ENCODE measurements at regions of chr19 and their contacts with region 1.

Region 1: GRCh38 chr19:44723952-44724319 is 24.6 kb upstream of the BCL3 start:
- DNase-seq: peak; percentile 62 to 93
- H3K4me3 ChIP-seq: no peak overlapping the region
- H3K27ac ChIP-seq: no peak overlapping the region
- H3K4me1 ChIP-seq: peaks cover 0 to 6% (median 4%) of the 10 kb centered on the region in 4 experiments; a peak in 5 of 7 replicates
- H3K27me3 ChIP-seq: no peaks in the 10 kb centered on the region; a peak in 1 of 7 replicates
- CTCF ChIP-seq: peak; percentile 96 to 98 (median 97)
- EP300 ChIP-seq: no peak
- POLR2A ChIP-seq: no peak
- RAD21 ChIP-seq: peak; percentile 97 to 99

Region 2: DNA sequence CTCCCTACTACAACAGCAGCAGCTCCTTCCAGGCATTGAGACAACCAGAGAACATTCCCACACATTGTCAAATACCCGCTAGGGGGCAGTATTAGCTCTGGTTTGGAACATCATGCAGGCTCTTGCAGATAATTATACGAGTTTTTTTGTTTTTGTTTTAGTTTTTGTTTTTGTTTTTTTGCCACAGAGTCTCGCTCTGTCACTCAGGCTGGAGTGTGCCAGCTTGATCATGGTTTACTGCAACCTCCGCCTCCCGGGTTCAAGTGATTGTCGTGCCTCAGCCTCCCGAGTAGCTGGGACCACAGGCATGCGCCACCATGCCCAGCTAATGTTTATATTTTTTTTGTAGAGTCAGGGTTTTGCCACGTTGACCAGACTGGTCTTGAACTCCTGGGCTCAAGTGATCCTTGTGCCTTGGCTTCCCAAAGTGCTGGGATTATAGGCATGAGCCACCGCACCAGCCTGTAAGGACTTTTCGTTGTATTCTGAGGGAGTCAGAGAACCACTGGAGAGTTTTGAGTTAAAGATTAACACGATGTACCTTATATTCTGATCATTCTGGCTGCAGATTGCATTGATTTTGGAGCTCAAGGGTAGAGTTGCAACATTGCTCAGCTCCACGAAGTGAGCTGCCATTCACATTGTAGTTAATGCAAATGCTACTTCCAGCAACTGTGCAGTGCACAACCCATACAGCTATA is 152.8 kb before region 1 on chr19:
- CTCF ChIA-PET with region 1: interaction called, 18 read pairs
- POLR2A ChIA-PET with region 1: no interaction called
- DNase-seq: peak in 1 of 2 experiments; percentile 80
- H3K4me3 ChIP-seq: no peak overlapping the region
- H3K27ac ChIP-seq: no peak overlapping the region
- H3K4me1 ChIP-seq: no peaks in the 10 kb centered on the region
- H3K27me3 ChIP-seq: no peaks in the 10 kb centered on the region
- CTCF ChIP-seq: peak in 2 of 3 experiments; percentile 62 to 82; a peak in 3 of 4 replicates
- EP300 ChIP-seq: no peak
- POLR2A ChIP-seq: no peak
- RAD21 ChIP-seq: peak; percentile 80 to 89

Region 3: GRCh38 chr19:44689056-44689895 is 34.7 kb before region 1 on chr19:
- CTCF ChIA-PET with region 1: interaction called, 134 read pairs
- POLR2A ChIA-PET with region 1: interaction called, 3 read pairs
- DNase-seq: peak; percentile 65 to 96
- H3K4me3 ChIP-seq: peak overlapping the region in 1 of 4 experiments; percentile 34; a peak in 1 of 8 replicates
- H3K27ac ChIP-seq: no peak overlapping the region
- H3K4me1 ChIP-seq: peaks cover 0 to 12% (median 2%) of the 10 kb centered on the region in 4 experiments; a peak in 4 of 7 replicates
- H3K27me3 ChIP-seq: no peaks in the 10 kb centered on the region
- CTCF ChIP-seq: peak; percentile 92 to 94 (median 93)
- EP300 ChIP-seq: no peak
- POLR2A ChIP-seq: no peak
- RAD21 ChIP-seq: peak; percentile 90 to 91

Region 4: DNA sequence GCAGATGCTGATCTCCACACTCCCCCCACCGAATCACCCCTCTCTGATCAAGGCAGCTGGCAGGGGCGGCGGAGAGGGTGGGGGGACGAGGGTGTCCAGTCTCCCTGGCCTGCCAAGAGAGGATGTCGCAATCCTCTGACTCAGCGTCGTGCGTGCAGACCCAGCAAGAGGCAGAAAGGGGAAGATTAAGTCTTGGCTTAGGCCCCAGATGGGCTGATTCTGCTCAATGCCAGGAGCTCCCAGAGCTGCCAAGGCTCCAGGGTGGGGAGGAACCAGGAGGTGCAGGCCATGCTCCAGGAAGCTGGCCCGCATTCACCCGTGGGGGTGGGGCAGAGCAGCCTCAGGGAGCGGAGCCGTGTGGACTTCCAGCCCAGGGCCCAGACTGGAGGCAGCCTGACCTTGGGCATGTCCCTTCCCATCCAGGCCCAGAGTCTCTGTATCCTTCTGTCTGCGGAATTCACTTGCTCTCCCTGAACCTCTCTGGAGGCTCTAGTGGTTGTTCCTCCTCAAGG is 18.0 kb after region 1 on chr19:
- CTCF ChIA-PET with region 1: interaction called, 91 read pairs
- POLR2A ChIA-PET with region 1: interaction called, 3 read pairs
- DNase-seq: no peak
- H3K4me3 ChIP-seq: no peak overlapping the region
- H3K27ac ChIP-seq: no peak overlapping the region
- H3K4me1 ChIP-seq: peaks cover 0 to 4% (median 2%) of the 10 kb centered on the region in 4 experiments; a peak in 4 of 7 replicates
- H3K27me3 ChIP-seq: peaks cover 6 to 20% (median 15%) of the 10 kb centered on the region in 4 experiments
- CTCF ChIP-seq: no peak
- EP300 ChIP-seq: no peak
- POLR2A ChIP-seq: no peak
- RAD21 ChIP-seq: no peak

Region 5: DNA sequence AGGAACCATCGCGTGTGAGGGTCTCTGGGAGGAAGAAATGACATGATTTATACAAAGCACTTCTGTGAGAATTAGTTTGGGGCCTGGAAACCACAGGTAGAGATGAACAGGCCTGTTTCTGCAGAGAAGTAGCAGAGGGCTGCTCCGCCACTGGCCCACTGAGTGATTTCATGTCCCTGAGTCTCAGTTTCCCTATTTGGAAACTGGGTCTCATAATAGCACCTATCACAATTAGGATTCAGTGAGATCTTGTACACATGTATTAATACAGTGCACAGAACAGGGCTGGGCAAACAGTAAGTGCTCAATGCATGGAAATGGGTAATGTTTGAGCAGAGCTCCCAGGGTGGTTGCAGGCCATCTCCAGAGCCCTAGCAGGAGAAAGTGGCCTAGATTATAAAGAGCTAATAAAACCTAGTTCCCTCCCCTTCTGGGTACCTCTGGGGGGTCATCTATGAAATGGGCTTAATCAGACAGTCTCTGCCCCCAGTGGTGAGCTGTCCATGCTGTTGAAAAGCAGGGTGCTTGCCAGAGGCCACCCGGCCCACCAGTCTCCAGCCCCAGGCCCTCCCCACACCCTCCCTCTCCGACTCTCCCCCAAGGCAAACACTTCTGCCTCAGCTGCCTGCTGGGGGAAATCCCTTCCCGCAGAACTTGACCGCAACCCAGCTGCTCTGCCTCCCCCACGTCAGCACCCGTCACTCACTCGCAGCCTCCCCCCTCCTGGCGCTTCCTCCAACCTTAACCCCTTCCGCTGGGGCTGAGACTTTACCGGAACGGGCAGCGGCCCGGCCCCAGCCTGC is 29.1 kb after region 1 on chr19:
- CTCF ChIA-PET with region 1: interaction called, 34 read pairs
- POLR2A ChIA-PET with region 1: interaction called, 7 read pairs
- DNase-seq: peak in 1 of 2 experiments; percentile 70
- H3K4me3 ChIP-seq: peak overlapping the region in 2 of 4 experiments; percentile 16 to 66; a peak in 4 of 8 replicates
- H3K27ac ChIP-seq: no peak overlapping the region
- H3K4me1 ChIP-seq: peaks cover 11 to 38% (median 15%) of the 10 kb centered on the region in 4 experiments
- H3K27me3 ChIP-seq: peaks cover 36 to 86% (median 71%) of the 10 kb centered on the region in 4 experiments
- CTCF ChIP-seq: no peak
- EP300 ChIP-seq: no peak
- POLR2A ChIP-seq: no peak
- RAD21 ChIP-seq: no peak

Region 6: GRCh38 chr19:44782729-44783128 is 58.8 kb after region 1 on chr19:
- CTCF ChIA-PET with region 1: interaction called, 21 read pairs
- POLR2A ChIA-PET with region 1: no interaction called
- DNase-seq: no peak
- H3K4me3 ChIP-seq: no peak overlapping the region
- H3K27ac ChIP-seq: no peak overlapping the region
- H3K4me1 ChIP-seq: no peaks in the 10 kb centered on the region
- H3K27me3 ChIP-seq: no peaks in the 10 kb centered on the region
- CTCF ChIP-seq: no peak
- EP300 ChIP-seq: no peak
- POLR2A ChIP-seq: no peak
- RAD21 ChIP-seq: 0 out of 4 replicates have a peak, but pooled peaks of 1 of the 2 experiments have one; percentile 5

Region 7: DNA sequence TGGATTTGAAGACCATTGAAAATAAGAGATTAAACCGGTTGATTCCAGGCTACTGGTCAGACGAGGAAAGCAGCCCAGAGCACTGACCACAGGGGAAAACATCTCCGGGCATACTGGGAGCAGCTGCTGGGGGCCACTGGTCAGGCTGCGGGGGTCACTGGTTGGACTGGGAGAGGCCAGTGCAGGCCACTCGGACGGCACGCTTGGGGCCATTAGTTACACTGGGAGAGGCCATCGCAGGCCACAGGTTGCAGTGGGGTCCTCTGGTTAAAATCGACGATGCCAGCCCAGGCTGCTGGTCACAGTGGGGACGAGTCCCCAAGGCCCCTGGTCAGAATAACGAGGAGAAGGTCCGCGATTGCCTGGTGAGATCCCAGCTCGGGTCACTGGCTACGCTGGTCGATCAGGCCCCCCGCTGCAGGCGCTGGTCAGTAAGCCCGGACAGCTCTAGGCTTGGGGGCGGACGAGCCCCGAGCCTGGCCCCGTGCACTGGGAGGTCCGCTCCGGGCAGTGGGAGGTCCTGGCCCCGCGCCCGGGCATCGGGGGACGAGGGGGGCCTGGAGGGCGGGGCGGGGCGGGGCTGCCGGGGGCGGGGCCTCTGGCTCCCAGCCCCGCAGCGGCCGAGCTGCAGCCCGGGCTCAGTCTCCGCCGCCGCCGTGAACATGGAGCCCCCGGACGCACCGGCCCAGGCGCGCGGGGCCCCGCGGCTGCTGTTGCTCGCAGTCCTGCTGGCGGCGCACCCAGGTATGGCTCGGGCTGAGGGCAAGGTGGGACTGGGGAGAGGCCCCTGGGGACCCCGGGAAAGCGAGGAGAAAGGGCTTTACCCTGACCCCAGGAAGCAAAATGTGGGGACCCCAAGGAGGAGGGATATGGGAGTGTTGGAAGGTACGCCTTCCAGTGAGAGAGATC is 84.8 kb after region 1 on chr19 and contains the start of gene BCAM:
- CTCF ChIA-PET with region 1: interaction called, 17 read pairs
- POLR2A ChIA-PET with region 1: interaction called, 3 read pairs
- DNase-seq: peak in 1 of 2 experiments; percentile 87
- H3K4me3 ChIP-seq: peak within 1 kb of the TSS; percentile 64 to 96 (median 70)
- H3K27ac ChIP-seq: peak within 1 kb of the TSS; percentile 91
- H3K4me1 ChIP-seq: peaks cover 4 to 34% (median 21%) of the 10 kb centered on the region in 4 experiments
- H3K27me3 ChIP-seq: peaks cover 0 to 13% (median 11%) of the 10 kb centered on the region in 4 experiments; a peak in 6 of 7 replicates
- CTCF ChIP-seq: no peak
- EP300 ChIP-seq: no peak
- POLR2A ChIP-seq: peak in 1 of 2 experiments; percentile 50; a peak in 2 of 3 replicates
- RAD21 ChIP-seq: no peak
- total RNA-seq, gene BCAM: 81.4 and 83.0 TPM in 2 replicates